Panc1 (cell line): ENCODE measurements at regions of chr9 and their contacts with region 1.

Region 1: DNA sequence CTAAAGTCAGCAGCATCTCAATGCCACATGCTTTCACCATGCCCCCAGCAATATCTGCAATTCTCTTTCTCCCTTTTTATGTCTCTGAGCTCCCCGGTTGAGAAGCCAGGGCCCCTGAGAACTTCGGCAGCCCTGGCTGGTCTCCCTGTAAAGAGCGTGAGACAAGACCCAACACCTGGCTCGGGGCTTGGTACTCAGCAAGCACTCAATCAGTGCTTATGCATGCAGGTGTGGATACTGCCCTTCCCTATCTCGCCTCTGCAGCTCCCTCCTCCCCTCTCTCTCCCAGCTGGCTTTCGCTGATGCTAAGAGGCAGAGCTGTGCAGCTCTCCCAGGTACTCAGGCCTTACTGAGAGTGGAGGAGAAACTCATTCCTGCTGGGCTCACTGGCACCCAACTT is 41.7 kb upstream of the AKNA start:
- DNase-seq: no peak
- ATAC-seq: no peak
- H3K4me3 ChIP-seq: no peak overlapping the region
- H3K27ac ChIP-seq: no peak overlapping the region
- H3K4me1 ChIP-seq: no peaks in the 10 kb centered on the region
- H3K27me3 ChIP-seq: no peaks in the 10 kb centered on the region
- CTCF ChIP-seq: no peak

Region 2: DNA sequence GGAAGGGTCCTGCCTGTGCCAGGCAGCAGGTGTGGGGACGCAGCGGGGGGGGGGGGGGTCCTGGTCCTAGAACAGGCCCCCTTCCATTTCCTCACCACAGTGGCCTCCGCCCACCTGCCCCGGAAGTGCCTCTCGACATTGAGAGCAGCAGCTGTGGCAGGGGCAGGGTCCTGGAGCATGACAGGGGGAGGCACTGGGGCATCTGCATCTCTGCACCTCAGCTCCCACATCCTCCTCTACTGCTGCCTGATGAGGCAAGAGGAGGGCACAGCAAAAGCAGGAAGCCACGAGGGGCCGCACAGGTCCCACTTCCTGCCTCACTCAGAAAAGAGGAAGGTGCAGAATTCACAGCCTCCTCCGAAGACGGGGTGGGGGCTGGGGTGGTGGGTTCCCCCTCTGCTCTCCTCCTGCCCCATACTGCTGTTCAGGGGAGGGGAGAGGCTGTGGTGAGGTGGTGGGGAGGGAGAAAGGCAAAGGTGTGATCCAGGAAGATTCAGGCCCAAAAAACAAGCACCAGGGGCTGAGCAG is 56.5 kb before region 1 on chr9:
- CTCF ChIA-PET with region 1: no interaction called
- POLR2A ChIA-PET with region 1: interaction called, 13 read pairs
- in situ Hi-C with region 1: no loop called
- intact Hi-C with region 1: no loop called
- DNase-seq: no peak
- ATAC-seq: no peak
- H3K4me3 ChIP-seq: no peak overlapping the region
- H3K27ac ChIP-seq: no peak overlapping the region
- H3K4me1 ChIP-seq: no peaks in the 10 kb centered on the region
- H3K27me3 ChIP-seq: no peaks in the 10 kb centered on the region
- CTCF ChIP-seq: no peak